ENCODE measurements at regions of chr11 and their contacts with region 1.

Region 1: DNA sequence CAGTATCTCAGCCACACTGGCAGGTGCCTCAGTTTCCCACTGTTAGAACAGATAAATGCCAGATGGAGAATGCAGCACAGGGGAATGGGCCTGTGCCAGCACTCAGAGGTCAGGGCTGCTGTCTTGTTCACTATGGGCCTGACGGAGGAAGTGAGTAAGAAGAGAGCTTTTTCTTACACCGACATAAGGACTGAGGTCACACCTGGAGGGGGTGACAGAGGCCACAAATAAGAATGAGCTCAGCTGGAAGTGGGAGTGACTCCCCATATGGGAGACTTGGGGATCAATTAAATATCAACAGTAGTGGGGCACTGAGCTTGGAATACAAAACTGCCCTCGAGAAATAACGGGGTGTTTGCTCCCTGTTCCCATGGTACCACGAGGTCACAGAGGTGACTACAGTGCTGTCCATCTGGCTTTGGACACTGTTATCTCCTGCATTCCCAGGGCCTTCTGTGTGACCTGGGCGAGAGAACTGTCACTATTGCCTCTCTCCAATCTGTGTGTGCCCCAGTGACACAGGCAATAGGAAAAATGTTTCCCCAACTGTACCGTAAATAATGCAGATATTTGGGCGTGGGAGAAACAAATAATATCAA is 94.1 kb upstream of the NNMT start:
- DNase-seq: no peak
- ATAC-seq: peak in 1 of 2 donors; percentile 3

Region 2: GRCh38 chr11:114257621-114258558 is 55.8 kb after region 1 on chr11:
- intact Hi-C with region 1: loop called in 1 of 2 experiments (anchors 5 kb)
- DNase-seq: peak; percentile 58
- ATAC-seq: peak; percentile 64 to 68

Region 3: GRCh38 chr11:114280696-114281095 is 78.6 kb after region 1 on chr11:
- intact Hi-C with region 1: no loop called
- DNase-seq: peak; percentile 75
- ATAC-seq: peak; percentile 93 to 94